ENCODE measurements at regions of chr3 and their contacts with region 1.

Region 1: GRCh38 chr3:124014366-124014942 is 22.5 kb upstream of the ROPN1 start:
- DNase-seq: no peak
- H3K4me3 Mint-ChIP-seq: no peak overlapping the region
- H3K27ac Mint-ChIP-seq: no peak overlapping the region
- H3K4me1 Mint-ChIP-seq: no peaks in the 10 kb centered on the region
- H3K27me3 Mint-ChIP-seq: peaks cover 89% of the 10 kb centered on the region
- CTCF ChIP-seq: no peak

Region 2: DNA sequence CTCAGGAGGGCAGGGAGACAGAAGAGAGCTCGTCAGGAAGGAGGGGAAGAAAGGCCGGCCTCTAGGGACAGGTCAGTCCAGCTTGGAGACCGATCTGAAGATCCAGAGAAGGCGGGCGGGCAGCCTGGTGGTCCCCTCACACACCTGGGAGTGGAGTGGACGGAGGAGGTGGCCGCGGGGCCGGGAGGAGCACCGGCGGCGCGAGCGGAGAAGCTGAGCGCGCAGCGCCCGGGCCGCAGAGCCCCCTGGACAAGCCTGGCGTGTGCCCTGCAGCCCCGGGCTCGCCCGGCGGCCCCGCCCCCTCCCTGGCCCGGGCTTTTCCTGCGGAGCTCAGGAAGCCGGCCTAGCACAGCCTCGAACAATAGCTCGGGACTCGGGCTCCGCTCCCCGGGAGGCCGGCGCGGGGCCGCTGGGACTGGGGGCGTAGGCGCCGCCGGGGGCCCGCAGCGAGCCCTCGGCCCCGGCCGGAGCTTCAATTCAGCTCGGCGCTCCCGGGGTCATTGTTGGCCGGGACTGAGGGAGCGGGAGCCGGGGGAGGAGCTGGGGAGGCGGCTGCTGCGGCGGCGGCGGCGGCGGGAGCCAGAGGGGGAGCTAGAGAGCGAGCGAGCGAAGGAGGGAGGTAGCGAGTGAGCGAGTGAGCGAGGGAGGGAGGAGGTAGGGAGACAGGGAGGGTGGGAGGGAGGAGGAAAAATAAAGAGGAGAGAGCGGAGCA is 18.4 kb after region 1 on chr3:
- CTCF ChIA-PET with region 1: interaction called, 12 read pairs
- POLR2A ChIA-PET with region 1: interaction called, 3 read pairs
- intact Hi-C with region 1: no loop called
- DNase-seq: peak; percentile 65
- H3K4me3 Mint-ChIP-seq: peak overlapping the region; percentile 72
- H3K27ac Mint-ChIP-seq: no peak overlapping the region
- H3K4me1 Mint-ChIP-seq: peaks cover 8% of the 10 kb centered on the region
- H3K27me3 Mint-ChIP-seq: peaks cover 44% of the 10 kb centered on the region
- CTCF ChIP-seq: peak; percentile 77

Region 3: GRCh38 chr3:124063197-124063909 is 48.9 kb after region 1 on chr3:
- CTCF ChIA-PET with region 1: no interaction called
- POLR2A ChIA-PET with region 1: no interaction called
- intact Hi-C with region 1: no loop called
- DNase-seq: no peak
- H3K4me3 Mint-ChIP-seq: no peak overlapping the region
- H3K27ac Mint-ChIP-seq: no peak overlapping the region
- H3K4me1 Mint-ChIP-seq: no peaks in the 10 kb centered on the region
- H3K27me3 Mint-ChIP-seq: peaks cover 16% of the 10 kb centered on the region
- CTCF ChIP-seq: no peak

Region 4: DNA sequence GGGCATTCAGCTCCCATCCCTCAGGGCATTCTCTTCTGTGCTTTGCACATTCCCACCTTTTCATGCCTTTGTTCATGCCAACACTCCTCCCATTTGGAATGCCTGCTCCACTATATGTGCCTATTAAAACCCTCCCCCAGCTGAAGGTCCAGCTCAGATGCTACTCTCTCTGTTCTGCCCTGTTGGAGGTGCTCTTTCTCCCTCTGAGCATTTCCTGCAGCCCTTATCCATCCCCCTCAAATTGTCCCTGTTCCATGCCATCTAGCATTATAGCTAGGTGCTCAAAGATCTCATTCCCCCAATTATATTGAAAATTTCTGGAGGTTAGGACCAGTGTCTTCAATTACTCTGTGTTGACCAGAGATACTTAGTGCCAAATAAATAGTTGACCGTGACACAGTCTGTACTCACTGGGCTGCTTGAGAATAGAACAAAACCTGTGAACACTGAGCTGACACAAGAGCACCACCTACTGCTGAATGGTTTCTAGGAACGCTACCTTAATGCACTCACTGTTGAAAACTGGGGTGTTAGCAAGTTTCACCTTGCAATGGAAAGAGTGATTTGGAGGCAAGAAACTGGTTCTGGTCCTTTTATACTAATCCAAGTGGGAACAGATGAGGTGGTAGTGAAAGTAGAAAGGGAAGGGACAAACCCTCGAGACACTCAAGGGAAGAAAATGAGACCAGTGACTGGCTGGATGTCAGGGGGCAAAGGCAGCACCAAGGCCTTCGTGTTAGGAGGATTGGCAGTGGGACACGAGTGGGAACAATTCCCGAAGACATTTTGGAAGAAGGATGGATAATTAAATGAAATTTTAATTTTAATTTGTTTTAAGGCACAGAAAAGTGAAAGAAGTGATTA is 267.2 kb after region 1 on chr3:
- CTCF ChIA-PET with region 1: no interaction called
- POLR2A ChIA-PET with region 1: no interaction called
- intact Hi-C with region 1: loop called (anchors 1 kb)
- DNase-seq: peak; percentile 60
- H3K4me3 Mint-ChIP-seq: no peak overlapping the region
- H3K27ac Mint-ChIP-seq: no peak overlapping the region
- H3K4me1 Mint-ChIP-seq: peaks cover 6% of the 10 kb centered on the region
- H3K27me3 Mint-ChIP-seq: peaks cover 73% of the 10 kb centered on the region
- CTCF ChIP-seq: peak; percentile 74

Measured in MCF 10A (cell line).